ENCODE measurements at regions of chr3 and their contacts with region 1.

Region 1: GRCh38 chr3:67790043-67790442 is 135.6 kb upstream of the SUCLG2 start:
- DNase-seq: peak; percentile 27
- ATAC-seq: peak; percentile 96
- H3K4me3 ChIP-seq: no peak overlapping the region
- H3K27ac ChIP-seq: no peak overlapping the region
- H3K4me1 ChIP-seq: no peaks in the 10 kb centered on the region
- H3K27me3 ChIP-seq: no peaks in the 10 kb centered on the region
- CTCF ChIP-seq: peak; percentile 72 to 76 (median 74)
- EP300 ChIP-seq: no peak
- POLR2A ChIP-seq: no peak
- RAD21 ChIP-seq: peak; percentile 94

Region 2: DNA sequence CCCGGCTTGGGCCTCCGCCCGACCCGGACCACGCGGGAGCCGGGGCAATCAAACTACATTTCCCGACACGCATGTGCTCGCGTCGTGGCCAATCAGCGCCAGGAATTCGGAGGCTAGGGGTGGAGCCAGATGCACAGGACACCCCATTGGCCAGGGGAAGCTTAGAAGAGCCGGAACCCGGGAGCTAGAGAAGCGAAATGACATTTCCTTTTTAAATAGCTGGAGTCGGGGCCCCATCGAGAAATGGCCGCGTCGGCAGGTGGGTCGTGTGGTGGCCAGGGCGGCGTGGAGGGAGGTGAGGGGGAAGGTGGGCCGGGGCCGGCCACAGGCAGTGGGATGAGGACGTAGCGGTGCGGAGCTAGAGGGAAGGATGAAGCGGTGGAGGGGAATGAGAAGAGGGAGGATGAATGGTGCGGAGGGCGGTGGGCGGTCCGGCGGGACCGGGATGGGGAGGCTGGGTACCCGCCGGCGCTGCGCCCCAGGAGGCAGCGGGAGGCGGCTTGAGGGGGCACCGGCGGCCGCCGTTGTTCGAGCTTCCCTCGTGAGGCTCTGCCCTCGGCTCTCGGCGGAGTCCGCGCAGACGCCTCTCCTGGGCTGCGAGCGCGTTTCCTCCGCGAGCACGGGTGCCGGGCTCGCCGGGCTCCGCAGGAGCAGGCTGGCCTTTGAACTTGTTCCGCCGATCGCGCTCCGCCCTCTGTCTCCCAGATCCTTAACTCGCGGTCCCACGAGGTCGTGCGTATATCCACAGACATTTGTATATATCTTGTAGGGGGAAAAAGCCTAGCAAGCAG is 791.7 kb before region 1 on chr3 and contains the start of gene KBTBD8:
- CTCF ChIA-PET with region 1: no interaction called
- POLR2A ChIA-PET with region 1: no interaction called
- RAD21 ChIA-PET with region 1: no interaction called
- SMC1A ChIA-PET with region 1: no interaction called
- in situ Hi-C with region 1: loop called (anchors 25 kb)
- intact Hi-C with region 1: no loop called
- DNase-seq: peak; percentile 96
- ATAC-seq: peak; percentile 93
- H3K4me3 ChIP-seq: peak within 1 kb of the TSS; percentile 92
- H3K27ac ChIP-seq: peak within 1 kb of the TSS; percentile 74
- H3K4me1 ChIP-seq: peaks cover 8% of the 10 kb centered on the region; the same call in 1 of the 2 replicates
- H3K27me3 ChIP-seq: no peaks in the 10 kb centered on the region
- CTCF ChIP-seq: no peak
- EP300 ChIP-seq: no peak
- POLR2A ChIP-seq: peak; percentile 74; the same call in 1 of the 2 replicates
- RAD21 ChIP-seq: no peak
- polyA plus RNA-seq, gene KBTBD8: 8.5 to 9.2 TPM

Region 3: GRCh38 chr3:67384760-67385397 is 405.2 kb before region 1 on chr3:
- CTCF ChIA-PET with region 1: interaction called, 106 read pairs
- POLR2A ChIA-PET with region 1: no interaction called
- RAD21 ChIA-PET with region 1: interaction called, 37 read pairs
- SMC1A ChIA-PET with region 1: interaction called, 45 read pairs
- in situ Hi-C with region 1: loop called (anchors 5 kb)
- intact Hi-C with region 1: loop called (anchors 1 kb)
- DNase-seq: no peak
- ATAC-seq: peak; percentile 68
- H3K4me3 ChIP-seq: no peak overlapping the region
- H3K27ac ChIP-seq: no peak overlapping the region
- H3K4me1 ChIP-seq: peaks cover 6% of the 10 kb centered on the region; the same call in 1 of the 2 replicates
- H3K27me3 ChIP-seq: no peaks in the 10 kb centered on the region
- CTCF ChIP-seq: peak; percentile 39 to 61 (median 42)
- EP300 ChIP-seq: no peak
- POLR2A ChIP-seq: no peak
- RAD21 ChIP-seq: peak; percentile 63

Region 4: DNA sequence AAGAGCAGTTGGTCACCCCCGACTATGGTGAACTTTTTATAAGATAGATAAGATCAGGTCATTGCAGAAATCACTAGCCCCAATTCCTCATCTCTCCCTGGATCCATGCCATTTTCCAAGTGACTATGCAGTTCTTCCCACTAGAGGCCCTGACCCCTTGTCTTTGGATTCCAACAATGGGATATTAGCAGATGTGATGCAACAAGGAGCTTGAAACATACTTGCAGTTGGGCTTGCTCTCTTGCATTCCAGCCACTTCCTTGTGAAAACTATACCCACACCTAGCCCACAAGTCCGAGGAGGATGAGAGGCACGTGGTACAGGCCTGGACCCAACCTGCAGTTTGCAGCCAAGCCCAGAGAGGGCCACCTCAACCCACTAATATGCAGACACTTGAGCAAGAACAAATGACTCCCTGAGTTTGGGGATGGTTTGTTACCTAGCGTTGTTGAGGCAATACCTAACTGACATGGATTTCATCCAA is 196.2 kb before region 1 on chr3:
- CTCF ChIA-PET with region 1: interaction called, 13 read pairs
- POLR2A ChIA-PET with region 1: no interaction called
- RAD21 ChIA-PET with region 1: interaction called, 4 read pairs
- SMC1A ChIA-PET with region 1: interaction called, 8 read pairs
- in situ Hi-C with region 1: no loop called
- intact Hi-C with region 1: loop called (anchors 1 kb)
- DNase-seq: no peak
- ATAC-seq: peak; percentile 66
- H3K4me3 ChIP-seq: no peak overlapping the region
- H3K27ac ChIP-seq: no peak overlapping the region
- H3K4me1 ChIP-seq: 0 out of 2 replicates have a peak, but pooled peaks cover 3% of the 10 kb centered on the region
- H3K27me3 ChIP-seq: no peaks in the 10 kb centered on the region
- CTCF ChIP-seq: peak; percentile 25 to 29 (median 28); a peak in 4 of 6 replicates
- EP300 ChIP-seq: no peak
- POLR2A ChIP-seq: no peak
- RAD21 ChIP-seq: peak; percentile 35

Region 5: DNA sequence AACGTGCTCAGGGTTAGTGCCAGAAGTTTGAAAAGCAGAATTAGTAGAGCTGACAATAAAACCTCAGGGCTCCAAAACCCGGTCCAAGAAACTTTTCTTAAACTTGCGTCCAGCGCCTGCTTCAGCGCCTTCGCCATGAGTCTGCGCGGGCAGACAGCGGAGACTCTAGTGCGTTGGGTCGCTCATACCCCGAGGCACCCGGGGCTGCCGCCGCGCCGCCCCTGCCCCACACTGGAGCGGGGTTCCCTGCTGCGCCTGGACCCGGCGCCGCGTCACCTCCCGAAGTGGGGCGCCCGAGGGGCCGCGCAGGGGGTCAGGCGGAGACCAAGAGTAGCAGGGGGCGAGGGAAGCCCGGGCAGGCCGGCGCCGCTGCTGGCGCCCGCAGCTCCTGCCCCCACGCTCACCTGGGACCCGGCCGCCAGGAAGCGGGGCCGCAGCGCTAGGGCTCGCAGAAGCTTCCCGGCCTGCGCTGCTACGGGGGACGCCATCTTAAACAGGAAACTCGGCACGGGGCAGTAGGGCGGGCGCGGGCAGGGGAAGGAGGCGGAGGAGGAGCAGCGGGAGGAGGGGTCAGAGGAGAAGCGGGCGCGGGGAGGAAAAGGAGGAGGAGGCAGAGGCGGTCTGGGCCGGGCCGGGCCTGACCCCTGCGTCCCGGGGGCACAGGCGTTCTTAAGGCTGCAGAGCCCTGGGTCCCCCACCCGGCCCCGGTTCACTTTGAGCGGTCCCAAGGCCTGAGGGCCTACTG is 135.8 kb before region 1 on chr3 and contains the start of gene SUCLG2:
- CTCF ChIA-PET with region 1: no interaction called
- POLR2A ChIA-PET with region 1: no interaction called
- RAD21 ChIA-PET with region 1: no interaction called
- SMC1A ChIA-PET with region 1: no interaction called
- in situ Hi-C with region 1: no loop called
- intact Hi-C with region 1: loop called (anchors 2 kb)
- DNase-seq: no peak
- ATAC-seq: peak; percentile 90
- H3K4me3 ChIP-seq: peak within 1 kb of the TSS; percentile 94
- H3K27ac ChIP-seq: peak within 1 kb of the TSS; percentile 94
- H3K4me1 ChIP-seq: peaks cover 37% of the 10 kb centered on the region
- H3K27me3 ChIP-seq: no peaks in the 10 kb centered on the region
- CTCF ChIP-seq: no peak
- EP300 ChIP-seq: no peak
- POLR2A ChIP-seq: peak; percentile 93
- RAD21 ChIP-seq: no peak
- polyA plus RNA-seq, gene SUCLG2: 17.8 to 31.1 TPM

Region 6: DNA sequence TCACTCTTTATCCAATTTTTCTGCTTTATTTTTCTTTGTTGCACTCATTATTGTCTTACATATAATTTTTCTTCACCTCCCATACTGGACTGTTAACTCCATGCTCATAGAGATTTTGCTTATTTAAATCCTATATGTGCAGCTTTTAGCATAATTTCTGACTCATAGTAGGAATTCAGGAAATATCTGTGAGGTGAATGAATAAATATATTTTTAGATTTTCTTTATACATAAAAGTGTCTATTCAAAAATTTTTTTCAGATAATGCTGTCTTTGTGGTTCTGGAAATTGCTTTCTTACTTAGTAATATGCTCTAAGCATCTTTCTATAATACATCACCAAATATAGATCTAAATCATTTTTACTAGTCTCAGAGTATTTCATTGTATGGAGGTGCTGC is 56.1 kb after region 1 on chr3:
- CTCF ChIA-PET with region 1: no interaction called
- POLR2A ChIA-PET with region 1: no interaction called
- RAD21 ChIA-PET with region 1: no interaction called
- SMC1A ChIA-PET with region 1: no interaction called
- in situ Hi-C with region 1: no loop called
- intact Hi-C with region 1: no loop called
- DNase-seq: no peak
- ATAC-seq: no peak
- H3K4me3 ChIP-seq: no peak overlapping the region
- H3K27ac ChIP-seq: no peak overlapping the region
- H3K4me1 ChIP-seq: no peaks in the 10 kb centered on the region
- H3K27me3 ChIP-seq: no peaks in the 10 kb centered on the region
- CTCF ChIP-seq: no peak
- EP300 ChIP-seq: no peak
- POLR2A ChIP-seq: no peak
- RAD21 ChIP-seq: no peak

Region 7: GRCh38 chr3:67863869-67864268 is 73.8 kb after region 1 on chr3:
- CTCF ChIA-PET with region 1: no interaction called
- POLR2A ChIA-PET with region 1: no interaction called
- RAD21 ChIA-PET with region 1: no interaction called
- SMC1A ChIA-PET with region 1: no interaction called
- in situ Hi-C with region 1: no loop called
- intact Hi-C with region 1: no loop called
- DNase-seq: no peak
- ATAC-seq: peak; percentile 38; the same call in 1 of the 3 replicates
- H3K4me3 ChIP-seq: no peak overlapping the region
- H3K27ac ChIP-seq: no peak overlapping the region
- H3K4me1 ChIP-seq: no peaks in the 10 kb centered on the region
- H3K27me3 ChIP-seq: no peaks in the 10 kb centered on the region
- CTCF ChIP-seq: peak in 2 of 3 experiments; percentile 14 to 16; a peak in 2 of 6 replicates
- EP300 ChIP-seq: no peak
- POLR2A ChIP-seq: no peak
- RAD21 ChIP-seq: no peak

Region 8: DNA sequence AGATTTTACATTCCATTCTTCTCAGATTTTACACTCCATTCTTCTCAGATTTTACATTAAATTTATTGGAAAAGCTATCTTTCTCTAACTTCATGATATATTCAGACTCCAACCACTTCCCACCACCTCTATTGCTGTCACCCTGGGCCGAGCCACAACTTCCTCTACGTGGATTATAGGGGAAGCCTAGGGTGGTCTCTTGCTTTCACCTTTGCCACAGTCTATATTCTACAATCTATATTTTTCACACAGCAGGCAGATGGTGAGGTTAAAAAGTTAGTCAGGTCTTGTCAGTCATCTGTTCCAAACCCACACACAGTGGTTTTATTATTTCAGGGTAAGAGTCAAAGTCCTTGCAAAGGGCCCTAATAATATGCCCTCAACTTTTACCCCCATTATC is 235.1 kb after region 1 on chr3:
- CTCF ChIA-PET with region 1: no interaction called
- POLR2A ChIA-PET with region 1: no interaction called
- RAD21 ChIA-PET with region 1: no interaction called
- SMC1A ChIA-PET with region 1: no interaction called
- in situ Hi-C with region 1: no loop called
- intact Hi-C with region 1: no loop called
- DNase-seq: no peak
- ATAC-seq: no peak
- H3K4me3 ChIP-seq: no peak overlapping the region
- H3K27ac ChIP-seq: no peak overlapping the region
- H3K4me1 ChIP-seq: no peaks in the 10 kb centered on the region
- H3K27me3 ChIP-seq: no peaks in the 10 kb centered on the region
- CTCF ChIP-seq: no peak
- EP300 ChIP-seq: no peak
- POLR2A ChIP-seq: no peak
- RAD21 ChIP-seq: no peak